ENCODE measurements at regions of chr20 and their contacts with region 1.

Region 1: DNA sequence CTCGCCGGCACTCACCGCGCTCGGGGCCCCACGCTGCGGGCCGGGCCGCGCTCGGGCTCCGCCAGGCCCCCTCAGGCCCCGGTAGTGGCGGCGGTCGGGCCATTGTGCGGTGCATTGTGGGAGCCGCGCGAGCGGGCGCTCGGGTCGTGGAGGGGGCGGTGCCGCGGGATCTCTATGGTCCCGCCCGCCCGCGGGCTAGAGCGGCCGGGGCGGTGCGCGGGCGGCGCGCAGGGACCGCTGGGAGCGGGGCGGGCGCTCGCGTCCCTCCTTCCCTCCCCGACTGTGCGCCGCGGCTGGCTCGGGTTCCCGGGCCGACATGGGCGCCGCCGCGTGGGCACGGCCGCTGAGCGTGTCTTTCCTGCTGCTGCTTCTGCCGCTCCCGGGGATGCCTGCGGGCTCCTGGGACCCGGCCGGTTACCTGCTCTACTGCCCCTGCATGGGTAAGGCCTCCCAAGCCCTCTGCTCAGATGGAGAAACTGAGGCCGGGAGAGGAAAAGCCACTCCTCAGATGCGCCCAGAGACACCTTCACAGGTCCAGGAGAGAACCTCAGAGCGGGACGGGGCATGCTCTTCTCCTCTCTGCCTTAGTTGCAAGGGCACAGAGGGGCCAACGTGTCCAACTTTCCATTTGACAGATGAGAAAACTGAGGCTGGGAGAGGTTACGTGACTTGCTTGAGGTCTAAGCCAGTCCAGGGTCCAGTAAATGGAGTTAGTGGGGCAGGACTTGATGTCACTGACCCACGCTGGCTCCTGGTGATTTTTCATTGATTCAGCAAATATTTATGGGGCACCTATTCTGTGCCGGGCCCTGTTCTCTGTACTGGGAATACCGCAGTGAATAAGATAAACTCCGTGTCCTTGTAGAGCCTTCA is at the starts of genes PLAGL2 and POFUT1:
- H3K4me3 Mint-ChIP-seq: peak within 1 kb of the TSS; percentile 89
- H3K27ac Mint-ChIP-seq: peak within 1 kb of the TSS; percentile 85
- H3K4me1 Mint-ChIP-seq: peaks cover 67% of the 10 kb centered on the region
- H3K27me3 Mint-ChIP-seq: no peaks in the 10 kb centered on the region

Region 2: DNA sequence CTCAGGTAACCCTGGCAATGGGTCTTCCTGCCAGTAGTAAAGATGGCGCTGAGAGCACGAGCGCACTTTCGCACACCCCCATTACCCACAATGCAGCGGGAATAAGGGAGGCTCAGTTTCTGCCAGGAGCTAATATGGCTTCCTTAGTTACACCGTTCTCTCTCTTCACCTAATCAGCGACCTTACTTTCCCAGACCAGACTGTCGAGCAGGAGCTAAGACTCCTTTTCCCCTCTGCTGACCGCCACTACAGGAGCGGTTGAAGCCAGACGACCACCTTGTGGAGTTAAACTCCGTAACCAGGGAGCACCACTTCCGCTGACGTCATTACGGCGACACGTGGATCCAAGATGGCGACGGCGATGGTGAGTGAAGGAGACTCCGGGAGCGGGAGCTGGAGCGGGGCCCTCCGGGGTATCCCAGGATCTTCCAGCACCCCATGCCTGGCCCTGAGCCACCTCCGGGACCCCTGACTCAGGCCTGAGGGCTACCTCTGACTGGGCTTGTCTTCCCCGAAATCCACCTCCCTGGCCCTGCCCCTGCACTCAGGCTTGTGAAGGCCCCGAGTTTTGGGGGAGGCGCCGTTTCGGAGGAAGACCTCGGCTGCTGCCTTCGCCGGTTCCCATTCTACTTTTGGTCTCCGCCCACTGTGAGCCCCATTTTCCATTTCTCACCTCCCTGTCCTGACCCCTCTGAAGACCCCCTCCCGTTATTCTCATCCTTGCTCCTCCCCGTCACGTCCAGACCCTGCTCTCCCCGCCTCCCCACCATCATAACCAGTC is 98.3 kb before region 1 on chr20 and contains the start of gene TM9SF4:
- intact Hi-C with region 1: loop called (anchors 1 kb)
- H3K4me3 Mint-ChIP-seq: peak within 1 kb of the TSS; percentile 97
- H3K27ac Mint-ChIP-seq: peak within 1 kb of the TSS; percentile 93
- H3K4me1 Mint-ChIP-seq: peaks cover 47% of the 10 kb centered on the region
- H3K27me3 Mint-ChIP-seq: no peaks in the 10 kb centered on the region

Region 3: DNA sequence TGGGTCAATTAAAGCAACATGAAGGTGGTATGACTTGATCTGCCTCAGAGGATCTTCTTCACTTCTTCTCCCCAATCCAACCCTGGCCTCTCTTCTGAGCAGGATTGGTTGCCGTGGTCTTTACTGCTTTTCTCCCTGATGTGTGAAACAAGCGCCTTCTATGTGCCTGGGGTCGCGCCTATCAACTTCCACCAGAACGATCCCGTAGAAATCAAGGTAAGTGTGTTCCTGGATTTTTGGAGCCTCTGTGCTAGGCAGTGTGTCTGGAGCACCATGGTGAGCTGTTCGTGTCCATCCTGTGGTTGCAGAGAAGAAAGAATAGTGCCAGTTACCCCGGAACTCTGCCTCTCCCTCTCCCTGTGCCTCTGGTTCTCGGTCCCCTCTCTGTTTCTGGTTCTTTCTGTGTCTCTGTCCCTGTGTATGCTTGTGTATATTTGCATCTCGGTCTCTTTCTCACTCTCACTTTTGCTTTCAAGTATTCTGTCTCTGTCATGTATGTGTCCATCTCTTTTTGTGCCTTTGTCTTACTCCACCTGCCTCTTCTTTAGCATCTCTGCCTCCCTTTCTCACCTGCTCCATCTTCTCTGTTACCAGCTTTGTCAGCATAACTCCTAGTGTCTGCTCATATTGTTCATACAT is 74.8 kb before region 1 on chr20:
- intact Hi-C with region 1: no loop called
- H3K4me3 Mint-ChIP-seq: no peak overlapping the region
- H3K27ac Mint-ChIP-seq: no peak overlapping the region
- H3K4me1 Mint-ChIP-seq: peaks cover 14% of the 10 kb centered on the region
- H3K27me3 Mint-ChIP-seq: no peaks in the 10 kb centered on the region

Region 4: DNA sequence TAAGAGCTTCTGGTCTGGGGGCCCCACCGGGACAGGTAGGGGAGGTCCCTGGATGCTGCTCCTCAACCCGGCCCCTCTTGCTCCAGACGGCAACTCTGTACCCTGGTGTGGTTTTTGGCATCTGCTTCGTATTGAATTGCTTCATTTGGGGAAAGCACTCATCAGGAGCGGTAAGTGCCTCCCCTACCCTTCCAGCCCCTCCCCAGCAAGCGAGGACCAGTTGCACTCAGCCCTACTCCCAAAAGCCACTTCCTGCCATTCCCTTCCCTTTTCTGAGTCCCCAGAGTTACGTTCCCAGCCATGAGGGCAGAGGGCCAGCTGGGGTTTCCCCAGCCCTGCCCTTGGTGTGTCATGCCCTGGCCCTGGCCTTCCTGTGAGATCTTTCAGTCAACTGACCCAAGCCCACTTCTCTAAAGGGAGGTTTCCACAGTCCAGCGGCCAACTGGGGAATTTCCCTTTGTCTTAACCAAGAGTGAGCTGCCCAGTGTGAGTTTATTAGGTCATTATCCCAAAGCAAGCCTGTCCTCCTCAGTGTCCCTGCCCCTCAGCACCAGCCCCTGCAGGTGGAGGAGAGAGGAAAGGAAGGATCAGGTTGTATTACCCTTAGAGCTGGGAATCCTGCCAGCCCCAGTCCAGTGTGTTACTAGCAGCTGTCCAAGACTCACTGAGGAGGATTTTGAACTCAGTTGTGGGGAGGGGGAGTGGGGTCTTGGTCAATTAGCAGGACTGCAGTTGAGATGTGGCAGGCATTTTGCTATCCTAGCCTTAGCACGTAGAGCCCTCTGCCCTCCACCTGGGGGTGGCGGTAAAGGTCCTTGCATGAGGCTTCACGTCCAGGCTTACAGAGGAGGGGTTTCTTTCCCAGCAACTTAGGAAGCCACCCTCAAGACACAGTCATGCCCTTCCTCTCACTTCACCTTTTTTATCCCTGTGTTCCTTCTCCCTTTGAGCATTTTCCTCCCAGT is 52.6 kb before region 1 on chr20:
- intact Hi-C with region 1: loop called (anchors 2 kb)
- H3K4me3 Mint-ChIP-seq: peak overlapping the region; percentile 35
- H3K27ac Mint-ChIP-seq: peak overlapping the region; percentile 68
- H3K4me1 Mint-ChIP-seq: peaks cover 37% of the 10 kb centered on the region
- H3K27me3 Mint-ChIP-seq: peaks cover 16% of the 10 kb centered on the region

Region 5: GRCh38 chr20:32179515-32179914 is 28.3 kb before region 1 on chr20:
- intact Hi-C with region 1: no loop called
- H3K4me3 Mint-ChIP-seq: no peak overlapping the region
- H3K27ac Mint-ChIP-seq: no peak overlapping the region
- H3K4me1 Mint-ChIP-seq: peaks cover 9% of the 10 kb centered on the region
- H3K27me3 Mint-ChIP-seq: no peaks in the 10 kb centered on the region

Region 6: GRCh38 chr20:32357869-32358631 is 150.2 kb after region 1 on chr20 and contains the start of gene ASXL1:
- intact Hi-C with region 1: loop called (anchors 2 kb)
- H3K4me3 Mint-ChIP-seq: peak within 1 kb of the TSS; percentile 99
- H3K27ac Mint-ChIP-seq: peak within 1 kb of the TSS; percentile 98
- H3K4me1 Mint-ChIP-seq: peaks cover 49% of the 10 kb centered on the region
- H3K27me3 Mint-ChIP-seq: no peaks in the 10 kb centered on the region